Caco-2 (cell line): ENCODE measurements at regions of chr20 and their contacts with region 1.

Region 1: GRCh38 chr20:37534401-37535157 is 6.9 kb upstream of the BLCAP start:
- DNase-seq: peak; percentile 76 to 87
- H3K4me3 ChIP-seq: no peak overlapping the region
- H3K4me3 Mint-ChIP-seq: no peak overlapping the region
- H3K27ac Mint-ChIP-seq: no peak overlapping the region
- H3K4me1 ChIP-seq: peaks cover 11% of the 10 kb centered on the region
- H3K4me1 Mint-ChIP-seq: peaks cover 25% of the 10 kb centered on the region
- H3K27me3 ChIP-seq: no peaks in the 10 kb centered on the region
- H3K27me3 Mint-ChIP-seq: no peaks in the 10 kb centered on the region
- CTCF ChIP-seq: peak; percentile 96 to 97

Region 2: DNA sequence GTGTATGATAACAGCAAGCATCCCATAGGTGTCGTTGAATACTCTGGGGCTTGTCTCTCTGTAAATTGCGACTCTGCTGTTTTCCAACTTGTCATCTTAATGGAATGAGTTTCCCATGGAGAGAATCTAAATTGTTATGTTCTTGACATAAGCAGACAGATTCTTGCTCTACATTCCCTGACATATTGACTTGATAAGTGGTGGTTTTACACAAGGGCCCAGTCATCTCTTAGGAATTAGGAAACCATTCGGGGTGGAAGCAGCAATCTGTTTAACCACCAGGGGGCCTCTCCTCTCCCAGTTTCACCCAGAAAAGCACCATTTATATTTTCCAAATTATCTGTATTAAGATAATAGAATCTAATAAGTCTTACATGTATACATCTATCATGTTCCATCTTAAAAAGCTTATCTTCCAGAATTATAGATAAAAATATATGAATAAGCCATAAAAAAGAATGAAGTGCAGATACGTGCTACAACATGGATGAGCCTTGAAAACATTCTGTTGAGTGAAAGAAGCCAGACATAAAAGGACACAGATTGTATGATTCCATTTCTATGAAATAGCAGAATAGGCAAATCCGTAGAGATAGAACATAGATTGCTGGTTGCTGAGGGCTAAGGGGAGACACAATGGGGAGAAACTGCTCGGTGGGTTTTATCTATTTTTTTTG is 332.2 kb before region 1 on chr20:
- CTCF ChIA-PET with region 1: interaction called, 4 read pairs
- POLR2A ChIA-PET with region 1: no interaction called
- intact Hi-C with region 1: loop called (anchors 1 kb)
- DNase-seq: peak; percentile 74 to 82
- H3K4me3 ChIP-seq: no peak overlapping the region
- H3K4me3 Mint-ChIP-seq: no peak overlapping the region
- H3K27ac Mint-ChIP-seq: no peak overlapping the region
- H3K4me1 ChIP-seq: peaks cover 9% of the 10 kb centered on the region
- H3K4me1 Mint-ChIP-seq: peaks cover 16% of the 10 kb centered on the region
- H3K27me3 ChIP-seq: no peaks in the 10 kb centered on the region
- H3K27me3 Mint-ChIP-seq: no peaks in the 10 kb centered on the region
- CTCF ChIP-seq: peak; percentile 96 to 99

Region 3: GRCh38 chr20:37282556-37282955 is 252.0 kb before region 1 on chr20:
- CTCF ChIA-PET with region 1: interaction called, 3 read pairs
- POLR2A ChIA-PET with region 1: no interaction called
- intact Hi-C with region 1: loop called (anchors 1 kb)
- DNase-seq: peak in 1 of 2 experiments; percentile 55
- H3K4me3 ChIP-seq: no peak overlapping the region
- H3K4me3 Mint-ChIP-seq: no peak overlapping the region
- H3K27ac Mint-ChIP-seq: no peak overlapping the region
- H3K4me1 ChIP-seq: peaks cover 25% of the 10 kb centered on the region
- H3K4me1 Mint-ChIP-seq: peaks cover 7% of the 10 kb centered on the region
- H3K27me3 ChIP-seq: no peaks in the 10 kb centered on the region
- H3K27me3 Mint-ChIP-seq: no peaks in the 10 kb centered on the region
- CTCF ChIP-seq: peak; percentile 61 to 69

Region 4: DNA sequence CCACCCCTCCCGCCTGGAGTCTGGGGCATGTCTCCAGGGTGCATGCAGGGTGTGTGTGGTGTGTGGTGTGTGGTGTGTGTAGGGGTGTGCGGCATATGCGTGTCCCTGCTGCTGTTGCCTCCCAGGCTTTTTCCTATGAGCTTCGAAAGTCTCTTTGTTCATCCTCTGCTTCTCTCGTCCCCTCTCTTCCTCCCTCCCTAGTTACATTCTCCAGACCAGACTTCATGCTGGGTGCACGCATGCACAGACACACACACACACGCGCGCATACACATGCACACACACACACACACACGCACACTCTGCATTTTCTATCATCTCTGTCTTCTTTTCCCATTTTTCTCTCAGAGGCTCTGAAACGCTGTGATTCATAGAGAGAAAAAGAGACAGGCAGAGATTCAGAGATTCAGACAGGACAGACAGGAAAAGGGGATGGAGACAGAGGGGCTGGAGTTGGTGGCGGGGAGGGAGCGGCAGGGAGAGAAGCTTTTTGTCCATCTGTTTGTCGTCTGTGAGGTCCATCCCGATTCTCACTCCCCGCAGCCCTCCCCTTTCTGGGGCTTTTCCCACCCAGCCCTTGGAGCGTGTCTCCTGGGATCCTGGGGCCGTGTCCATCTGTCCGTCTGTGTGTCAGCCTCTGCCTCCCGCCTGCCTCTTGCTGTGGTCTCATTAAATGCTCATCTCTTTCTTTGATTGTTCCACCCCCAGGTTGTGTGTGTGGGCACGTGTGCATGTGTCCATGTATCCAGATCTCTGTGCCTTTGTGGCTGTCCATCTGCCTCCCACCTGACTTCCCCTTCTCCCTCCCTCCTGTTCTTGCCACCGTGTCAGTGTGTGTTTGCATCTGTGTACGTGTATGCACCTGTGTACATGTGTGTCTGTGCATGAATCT is 126.0 kb before region 1 on chr20:
- CTCF ChIA-PET with region 1: interaction called, 3 read pairs
- POLR2A ChIA-PET with region 1: no interaction called
- intact Hi-C with region 1: loop called (anchors 1 kb)
- DNase-seq: no peak
- H3K4me3 ChIP-seq: no peak overlapping the region
- H3K4me3 Mint-ChIP-seq: no peak overlapping the region
- H3K27ac Mint-ChIP-seq: no peak overlapping the region
- H3K4me1 ChIP-seq: peaks cover 13% of the 10 kb centered on the region
- H3K4me1 Mint-ChIP-seq: peaks cover 29% of the 10 kb centered on the region
- H3K27me3 ChIP-seq: no peaks in the 10 kb centered on the region
- H3K27me3 Mint-ChIP-seq: peaks cover 19% of the 10 kb centered on the region
- CTCF ChIP-seq: no peak

Region 5: DNA sequence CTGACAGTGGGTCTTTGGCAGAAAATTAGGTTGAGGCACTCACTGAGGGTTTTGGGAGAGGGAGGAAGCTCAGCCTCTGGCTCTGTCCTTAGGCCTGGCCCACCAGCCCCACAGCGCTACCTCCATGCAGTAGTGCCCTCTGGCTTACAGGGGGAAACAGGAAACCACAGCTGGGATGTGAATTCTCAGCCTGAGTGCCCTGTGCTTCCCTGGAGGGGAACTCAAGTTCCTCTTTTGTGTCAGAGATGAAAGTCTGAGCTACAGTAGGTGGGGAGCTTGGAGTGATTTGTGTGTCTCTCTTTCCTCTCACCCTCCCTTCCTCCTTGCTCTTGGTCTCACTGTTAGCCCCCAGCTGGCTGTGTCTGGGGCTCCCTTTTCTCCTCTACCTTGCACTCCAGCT is 41.3 kb after region 1 on chr20:
- CTCF ChIA-PET with region 1: no interaction called
- POLR2A ChIA-PET with region 1: no interaction called
- intact Hi-C with region 1: no loop called
- DNase-seq: peak in 1 of 2 experiments; percentile 40
- H3K4me3 ChIP-seq: no peak overlapping the region
- H3K4me3 Mint-ChIP-seq: no peak overlapping the region
- H3K27ac Mint-ChIP-seq: no peak overlapping the region
- H3K4me1 ChIP-seq: no peaks in the 10 kb centered on the region
- H3K4me1 Mint-ChIP-seq: no peaks in the 10 kb centered on the region
- H3K27me3 ChIP-seq: peaks cover 1% of the 10 kb centered on the region; the same call in 1 of the 2 replicates
- H3K27me3 Mint-ChIP-seq: peaks cover 17% of the 10 kb centered on the region
- CTCF ChIP-seq: no peak